Aorta (tissue), 5 donors: ENCODE measurements at regions of chr2 and their contacts with region 1.

Region 1: DNA sequence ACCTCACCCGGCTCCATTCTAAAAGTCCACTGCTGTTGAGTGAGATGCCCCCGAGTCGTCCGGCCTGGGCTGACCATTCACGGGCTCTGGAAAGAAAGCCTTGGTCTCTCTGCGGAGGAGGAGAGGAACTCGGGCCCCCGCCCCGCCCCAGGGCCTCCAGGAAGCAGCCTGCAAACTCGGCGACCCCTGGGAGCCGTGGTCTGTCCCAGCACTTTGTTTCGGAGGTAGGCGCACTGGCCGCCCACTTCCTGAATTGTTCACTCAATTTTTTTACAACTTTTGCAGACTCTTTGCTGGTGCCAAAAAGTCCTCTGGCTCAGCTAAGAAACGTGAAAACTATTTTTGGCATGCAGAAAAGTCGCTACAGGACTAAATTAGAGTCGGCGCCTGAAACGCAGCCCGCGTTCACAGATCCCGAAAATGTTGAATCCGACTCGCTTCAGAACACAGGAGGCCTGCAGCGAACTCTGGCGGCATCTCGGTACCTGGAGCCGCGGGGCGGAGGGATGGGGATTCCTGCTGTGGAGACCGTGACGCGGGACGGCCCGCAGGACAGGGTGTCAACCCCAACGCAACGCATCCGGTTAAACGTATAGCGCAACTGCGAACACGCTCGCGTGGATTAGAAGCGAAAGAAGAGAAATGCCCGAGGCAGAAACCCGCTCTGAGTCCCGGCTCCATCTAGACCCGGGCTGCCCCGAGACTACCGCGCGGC is 1.5 kb downstream of the PXDN start:
- DNase-seq: peak; percentile 88 to 95
- ATAC-seq: peak; percentile 77
- H3K4me3 ChIP-seq: peak overlapping the region; percentile 79 to 89
- H3K27ac ChIP-seq: peak overlapping the region; percentile 97 to 98
- H3K4me1 ChIP-seq: no peaks in the 10 kb centered on the region
- H3K27me3 ChIP-seq: no peaks in the 10 kb centered on the region

Region 2: DNA sequence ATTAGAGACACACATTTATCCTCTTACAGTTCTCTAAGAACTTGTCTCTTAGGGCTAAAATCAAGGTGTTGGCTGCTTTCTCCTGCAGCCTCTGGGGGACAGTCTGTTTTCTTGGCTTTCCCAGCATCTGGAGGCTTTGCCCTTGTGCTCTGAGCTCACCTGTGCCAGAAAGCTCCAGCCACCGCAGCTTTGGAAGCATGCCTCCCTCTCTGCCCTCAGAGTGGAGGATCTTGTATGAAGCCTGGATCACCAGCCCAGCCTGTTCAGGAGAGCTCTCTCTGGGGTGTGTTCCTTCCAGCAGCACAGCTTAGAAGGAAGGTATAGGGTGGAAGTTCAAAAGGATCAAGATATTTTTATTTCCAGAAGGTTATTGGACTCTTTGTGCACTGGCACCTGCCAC is 382.7 kb before region 1 on chr2:
- intact Hi-C with region 1: no loop called
- DNase-seq: no peak
- ATAC-seq: no peak
- H3K4me3 ChIP-seq: no peak overlapping the region
- H3K27ac ChIP-seq: no peak overlapping the region
- H3K4me1 ChIP-seq: no peaks in the 10 kb centered on the region
- H3K27me3 ChIP-seq: peaks cover 0 to 1% of the 10 kb centered on the region in 2 donors

Region 3: GRCh38 chr2:1591978-1592907 is 150.6 kb before region 1 on chr2:
- intact Hi-C with region 1: loop called (anchors 2 to 5 kb)
- DNase-seq: peak; percentile 88 to 92
- ATAC-seq: peak; percentile 79
- H3K4me3 ChIP-seq: no peak overlapping the region
- H3K27ac ChIP-seq: no peak overlapping the region
- H3K4me1 ChIP-seq: no peaks in the 10 kb centered on the region
- H3K27me3 ChIP-seq: no peaks in the 10 kb centered on the region

Region 4: DNA sequence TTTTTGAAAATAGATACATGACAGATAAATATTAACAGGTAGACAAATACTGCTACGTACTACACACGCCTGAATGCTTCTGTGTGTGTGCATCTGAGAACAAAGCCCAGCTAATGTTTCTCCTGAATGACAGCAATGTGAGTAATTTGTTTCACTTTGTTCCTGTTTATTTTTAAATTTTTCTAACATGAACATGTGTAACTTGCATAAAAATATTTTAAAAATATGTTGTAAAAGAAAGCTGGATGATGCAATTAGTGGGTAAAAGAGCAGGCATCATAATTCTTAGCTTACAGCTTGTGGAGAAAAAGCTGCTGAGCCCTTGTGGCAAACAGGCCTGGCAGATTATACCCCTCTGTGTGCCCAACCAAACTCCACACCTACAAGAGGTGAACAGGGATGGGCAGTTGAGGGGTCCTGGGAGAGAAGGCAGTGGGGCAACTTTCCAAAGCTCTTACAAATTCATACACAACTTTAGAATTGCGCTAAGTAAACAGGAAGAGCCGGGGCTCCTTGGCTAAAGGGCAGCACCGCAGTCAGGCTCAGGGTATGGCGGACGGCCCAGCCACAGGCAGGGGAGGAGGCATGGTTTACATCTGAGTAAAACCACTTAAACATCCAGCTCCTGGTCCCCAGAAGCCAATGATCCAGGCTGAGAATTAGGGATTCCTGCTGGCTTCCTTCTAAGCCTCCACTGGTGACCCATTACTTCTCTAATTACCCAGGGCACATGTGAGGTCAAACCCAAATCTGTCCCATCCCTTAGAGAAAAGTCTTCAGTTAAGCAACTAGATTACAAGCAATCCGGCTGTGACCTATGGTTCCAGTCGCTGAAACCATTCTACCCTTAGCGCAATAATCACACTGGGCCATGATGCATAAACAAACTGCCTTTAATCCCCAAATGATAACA is 12.6 kb before region 1 on chr2:
- intact Hi-C with region 1: loop called in 1 of 2 experiments (anchors 1 kb)
- DNase-seq: peak in 1 of 2 donors; percentile 76
- ATAC-seq: peak; percentile 43
- H3K4me3 ChIP-seq: no peak overlapping the region
- H3K27ac ChIP-seq: peak overlapping the region; percentile 62 to 94
- H3K4me1 ChIP-seq: peaks cover 4 to 5% of the 10 kb centered on the region in 2 donors
- H3K27me3 ChIP-seq: no peaks in the 10 kb centered on the region

Region 5: DNA sequence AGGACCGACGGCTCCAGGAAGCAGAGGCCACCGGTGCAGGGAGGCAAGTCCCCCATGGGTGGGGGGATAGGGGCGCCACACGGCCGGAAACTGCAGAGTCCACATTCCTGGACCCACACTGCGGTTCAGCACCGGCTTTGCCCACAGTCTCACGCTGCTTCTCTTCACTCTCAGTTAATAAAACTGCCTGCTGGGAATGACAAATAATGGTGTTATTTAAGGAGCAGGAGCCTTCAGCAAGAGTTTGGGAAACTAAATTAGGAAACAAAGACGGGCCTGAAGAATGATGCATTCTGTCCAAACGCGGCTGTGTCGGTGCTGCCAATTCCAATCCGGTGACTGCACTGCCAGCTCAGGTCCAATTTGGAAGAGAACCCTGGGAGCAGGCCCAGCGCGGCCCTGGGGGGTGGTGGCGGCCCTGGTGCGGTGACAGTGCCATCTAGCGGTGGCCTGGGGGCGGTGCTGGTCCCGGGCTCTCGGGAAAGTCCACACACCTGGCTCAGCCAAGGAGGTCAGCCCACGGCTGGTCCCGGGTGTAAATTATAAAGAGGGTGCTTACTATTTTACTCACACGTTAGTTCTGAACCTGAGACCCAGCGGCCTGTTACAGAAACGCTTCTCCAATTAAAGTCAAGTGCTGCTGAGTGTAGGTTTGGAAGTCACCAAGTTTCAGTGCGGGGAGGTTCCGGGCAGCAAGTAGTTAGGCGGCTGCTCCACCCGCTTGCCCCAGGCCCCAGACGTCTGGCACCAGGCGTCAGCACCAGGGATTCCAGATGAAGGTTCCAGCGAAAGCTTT is 74.6 kb after region 1 on chr2:
- intact Hi-C with region 1: loop called in 1 of 2 experiments (anchors 10 kb)
- DNase-seq: peak; percentile 94 to 98
- ATAC-seq: peak; percentile 95
- H3K4me3 ChIP-seq: no peak overlapping the region
- H3K27ac ChIP-seq: peak overlapping the region; percentile 70 to 95
- H3K4me1 ChIP-seq: no peaks in the 10 kb centered on the region
- H3K27me3 ChIP-seq: no peaks in the 10 kb centered on the region

Region 6: DNA sequence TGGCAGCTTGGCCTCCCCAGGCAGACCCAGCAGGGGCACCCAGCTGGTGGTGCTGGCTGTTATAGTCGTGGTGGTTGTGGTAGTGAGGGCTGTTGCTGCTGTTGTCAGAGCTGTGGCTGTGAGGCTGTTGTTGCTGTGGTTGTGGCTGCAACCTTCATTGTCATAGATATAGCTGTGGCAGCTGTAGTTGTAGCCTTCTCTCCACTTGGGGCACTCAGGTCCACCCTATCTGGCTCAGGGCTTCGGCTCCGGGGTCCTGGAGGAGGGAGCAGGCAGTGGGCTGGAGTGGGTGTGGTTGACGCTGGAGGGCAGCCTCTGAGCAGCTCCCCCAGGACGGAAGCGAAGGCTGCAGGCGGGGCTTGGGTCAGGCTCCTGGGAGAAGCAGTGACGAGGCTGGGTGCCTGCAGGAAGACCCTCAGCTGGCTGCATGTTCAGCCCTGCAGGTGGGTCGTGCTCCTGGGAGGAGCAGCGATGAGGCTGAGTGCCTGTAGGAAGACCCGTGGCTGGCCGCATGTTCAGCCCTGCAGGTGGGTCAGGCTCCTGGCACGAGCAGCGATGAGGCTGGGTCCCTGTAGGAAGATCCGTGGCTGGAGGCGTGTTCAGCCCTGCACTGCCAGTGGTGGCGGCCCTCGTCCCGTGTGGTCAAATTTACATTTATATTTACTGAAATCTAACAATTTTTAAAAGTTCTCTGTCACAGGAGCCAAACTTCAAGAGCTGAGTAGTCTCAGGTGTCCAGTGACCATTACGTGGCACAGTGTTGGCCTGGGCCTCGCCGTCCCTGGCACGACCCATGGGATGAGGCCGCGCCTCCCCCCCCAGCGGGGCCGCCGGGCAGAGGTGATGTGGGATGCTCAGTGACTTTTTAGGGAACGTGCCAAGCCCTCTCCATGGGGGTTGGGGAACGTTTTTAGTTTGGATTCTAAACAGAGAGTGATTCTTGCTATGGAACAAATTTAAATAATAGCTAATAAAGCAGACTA is 80.6 kb after region 1 on chr2:
- intact Hi-C with region 1: loop called (anchors 2 to 10 kb)
- DNase-seq: peak in 1 of 2 donors; percentile 82
- ATAC-seq: peak; percentile 24
- H3K4me3 ChIP-seq: peak overlapping the region in 1 of 2 donors; percentile 3
- H3K27ac ChIP-seq: peak overlapping the region; percentile 91 to 93
- H3K4me1 ChIP-seq: no peaks in the 10 kb centered on the region
- H3K27me3 ChIP-seq: no peaks in the 10 kb centered on the region